ENCODE measurements at regions of chr1 and their contacts with region 1.

Region 1: DNA sequence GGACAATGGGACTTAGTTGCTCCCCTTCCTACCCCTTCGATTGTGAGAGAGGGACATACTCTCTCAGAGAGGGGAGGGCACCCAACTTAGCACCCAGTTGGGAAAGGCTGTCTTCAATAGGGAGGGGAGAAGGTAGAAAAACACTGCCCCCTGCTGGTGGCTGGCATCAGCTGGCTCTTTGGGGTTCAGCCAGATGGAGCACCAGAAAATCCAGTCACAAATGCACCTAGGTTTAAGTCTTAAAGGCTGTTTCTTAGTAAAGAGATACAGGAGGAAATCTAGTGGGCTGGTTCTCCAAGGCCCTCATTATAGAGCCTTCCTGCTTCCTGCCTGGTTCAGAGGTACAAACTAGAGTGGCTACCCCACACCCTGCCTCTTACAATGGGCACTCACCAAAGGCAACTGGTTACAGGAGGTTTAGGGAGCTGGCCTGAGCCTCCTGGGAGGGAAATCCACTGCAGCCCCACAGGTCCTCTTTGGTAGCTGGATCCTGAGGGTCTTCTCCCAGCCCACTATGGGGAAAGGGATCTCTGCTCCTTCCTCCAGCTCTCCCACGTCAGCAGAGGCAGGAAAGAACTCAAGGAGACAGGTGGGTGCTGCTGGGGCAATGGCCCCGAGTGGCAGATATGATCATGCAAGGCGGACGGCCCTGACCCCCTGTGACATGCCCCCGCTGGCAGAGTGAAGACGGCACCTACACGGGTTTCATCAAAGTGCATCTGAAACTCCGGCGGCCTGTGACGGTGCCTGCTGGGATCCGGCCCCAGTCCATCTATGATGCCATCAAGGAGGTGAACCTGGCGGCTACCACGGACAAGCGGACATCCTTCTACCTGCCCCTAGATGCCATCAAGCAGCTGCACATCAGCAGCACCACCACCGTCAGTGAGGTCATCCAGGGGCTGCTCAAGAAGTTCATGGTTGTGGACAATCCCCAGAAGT is 28.3 kb downstream of the EIF2D start:
- DNase-seq: no peak
- H3K4me3 ChIP-seq: no peak overlapping the region
- H3K27me3 ChIP-seq: no peaks in the 10 kb centered on the region
- CTCF ChIP-seq: peak; percentile 90

Region 2: GRCh38 chr1:205284343-205285144 is 1299.4 kb before region 1 on chr1:
- CTCF ChIA-PET with region 1: no interaction called
- POLR2A ChIA-PET with region 1: no interaction called
- DNase-seq: peak; percentile 92
- H3K4me3 ChIP-seq: no peak overlapping the region
- H3K27me3 ChIP-seq: no peaks in the 10 kb centered on the region
- CTCF ChIP-seq: peak; percentile 44

Region 3: DNA sequence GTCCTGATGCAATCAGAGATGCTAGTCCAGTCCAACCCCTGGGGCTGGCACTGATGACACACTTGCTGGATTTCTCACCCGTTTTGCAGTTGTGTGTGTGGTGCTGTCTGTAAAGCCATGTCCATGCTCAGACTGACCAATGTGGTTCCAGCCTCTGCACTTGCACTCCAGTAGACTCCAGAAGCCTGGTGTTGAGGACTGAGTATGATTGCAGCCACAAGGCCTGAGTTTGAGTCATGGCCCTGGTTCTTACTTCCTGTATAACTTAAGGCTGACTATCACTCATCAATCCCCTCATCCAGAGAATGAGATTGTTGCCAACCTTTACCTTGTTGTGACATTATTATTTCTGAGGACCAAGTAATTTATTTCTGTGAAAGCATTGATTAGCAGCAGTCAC is 148.5 kb before region 1 on chr1:
- CTCF ChIA-PET with region 1: no interaction called
- POLR2A ChIA-PET with region 1: no interaction called
- DNase-seq: no peak
- H3K4me3 ChIP-seq: no peak overlapping the region
- H3K27me3 ChIP-seq: no peaks in the 10 kb centered on the region
- CTCF ChIP-seq: no peak

Region 4: DNA sequence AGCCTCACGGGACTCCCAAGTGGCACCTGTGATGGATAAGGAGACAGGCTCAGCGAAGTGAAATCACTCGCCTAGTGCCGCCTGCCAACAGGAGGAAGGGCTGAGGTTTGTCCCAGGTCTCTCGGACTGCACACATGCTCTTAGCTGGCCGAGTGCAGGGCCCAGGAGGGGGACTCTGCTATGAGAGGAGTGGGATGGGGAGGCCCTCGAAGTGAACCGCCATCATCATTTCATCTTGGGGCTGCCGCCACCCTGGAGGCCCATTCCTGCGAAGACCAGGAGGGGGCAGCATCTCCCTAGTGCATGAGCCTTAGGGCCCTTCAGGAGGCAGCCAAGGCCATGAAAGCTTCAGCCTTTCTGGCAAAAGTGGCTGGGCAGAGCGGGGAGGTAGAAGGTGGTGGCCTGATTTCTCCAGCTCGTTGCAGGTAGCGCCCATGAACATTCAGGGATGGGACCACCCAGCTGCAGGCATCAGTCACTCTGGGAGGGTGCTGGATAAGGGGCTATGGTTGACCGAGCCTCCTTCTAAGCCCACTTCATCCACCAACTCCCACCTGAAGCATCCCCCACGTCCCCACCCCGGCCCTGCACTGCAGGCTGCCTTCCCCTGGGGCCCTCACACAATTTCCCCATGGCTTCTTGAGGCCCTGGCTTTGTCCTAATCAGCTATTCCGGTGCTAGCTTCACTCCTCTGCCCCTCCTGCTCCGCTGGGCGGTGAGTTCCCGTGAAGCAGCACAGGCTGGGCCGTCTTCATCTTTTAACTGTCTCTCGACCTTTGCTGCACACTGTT is 93.8 kb before region 1 on chr1:
- CTCF ChIA-PET with region 1: interaction called, 150 read pairs
- POLR2A ChIA-PET with region 1: no interaction called
- DNase-seq: no peak
- H3K4me3 ChIP-seq: no peak overlapping the region
- H3K27me3 ChIP-seq: no peaks in the 10 kb centered on the region; the same call in 1 of the 2 replicates
- CTCF ChIP-seq: peak; percentile 98

Region 5: GRCh38 chr1:206503591-206504362 is 80.2 kb before region 1 on chr1:
- CTCF ChIA-PET with region 1: interaction called, 23 read pairs
- POLR2A ChIA-PET with region 1: no interaction called
- DNase-seq: peak; percentile 88
- H3K4me3 ChIP-seq: no peak overlapping the region
- H3K27me3 ChIP-seq: 0 out of 2 replicates have a peak, but pooled peaks cover 3% of the 10 kb centered on the region
- CTCF ChIP-seq: no peak

Region 6: DNA sequence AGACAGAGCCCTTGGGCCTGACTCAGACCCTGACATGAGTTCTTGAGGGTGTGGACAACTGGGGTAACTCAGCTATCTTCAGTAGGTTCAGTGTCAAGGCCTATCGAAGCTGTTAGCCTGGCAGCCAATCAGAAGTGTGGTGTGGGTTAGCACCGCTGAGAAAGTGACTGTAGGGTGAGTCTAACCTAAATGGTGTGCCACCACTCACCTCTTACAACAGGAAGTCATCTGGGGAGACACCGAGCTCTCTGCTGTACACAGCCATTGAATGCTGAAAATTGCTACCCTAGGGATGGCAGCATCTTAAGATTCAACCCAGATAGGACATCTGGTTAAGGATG is 32.0 kb before region 1 on chr1:
- CTCF ChIA-PET with region 1: interaction called, 50 read pairs
- POLR2A ChIA-PET with region 1: no interaction called
- DNase-seq: no peak
- H3K4me3 ChIP-seq: no peak overlapping the region
- H3K27me3 ChIP-seq: peaks cover 10% of the 10 kb centered on the region
- CTCF ChIP-seq: no peak

Region 7: GRCh38 chr1:206635080-206635977 is 51.4 kb after region 1 on chr1 and contains the start of gene DYRK3:
- CTCF ChIA-PET with region 1: no interaction called
- POLR2A ChIA-PET with region 1: no interaction called
- DNase-seq: peak; percentile 46
- H3K4me3 ChIP-seq: peak within 1 kb of the TSS; percentile 83
- H3K27me3 ChIP-seq: no peaks in the 10 kb centered on the region
- CTCF ChIP-seq: 0 out of 2 replicates have a peak, but pooled peaks have one; percentile 13
- polyA plus RNA-seq, gene DYRK3: 7.4 and 10.8 TPM in 2 replicates

Region 8: GRCh38 chr1:206716870-206717673 is 133.1 kb after region 1 on chr1:
- CTCF ChIA-PET with region 1: no interaction called
- POLR2A ChIA-PET with region 1: no interaction called
- DNase-seq: no peak
- H3K4me3 ChIP-seq: no peak overlapping the region
- H3K27me3 ChIP-seq: no peaks in the 10 kb centered on the region
- CTCF ChIP-seq: no peak